Right cardiac atrium (tissue), 5 donors: ENCODE measurements at regions of chr5 and their contacts with region 1.

Region 1: DNA sequence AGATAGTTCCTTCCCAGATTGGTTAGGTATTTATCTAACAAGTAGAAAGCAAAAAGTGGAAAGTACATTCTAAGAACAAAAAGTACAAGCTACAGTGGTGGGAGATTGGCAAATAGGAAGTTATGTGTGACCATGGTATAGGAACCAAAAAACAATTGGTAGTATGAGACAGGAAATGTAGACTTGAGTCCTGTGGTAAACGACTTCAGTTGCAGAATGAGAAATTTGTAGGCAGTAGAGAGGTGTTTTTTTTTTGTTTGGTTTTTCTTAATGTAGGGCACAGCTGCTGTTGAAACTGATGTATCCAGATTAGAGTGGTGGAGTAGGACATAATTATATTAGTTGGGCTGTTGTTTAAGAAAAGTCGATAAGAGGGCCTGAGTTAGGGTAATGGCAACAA is 72.0 kb downstream of the CCNH start:
- DNase-seq: no peak
- ATAC-seq: peak; percentile 32 to 51
- H3K4me3 ChIP-seq: no peak overlapping the region
- H3K27ac ChIP-seq: no peak overlapping the region
- H3K4me1 ChIP-seq: no peaks in the 10 kb centered on the region
- H3K27me3 ChIP-seq: no peaks in the 10 kb centered on the region

Region 2: GRCh38 chr5:87277279-87277835 is 63.4 kb before region 1 on chr5:
- intact Hi-C with region 1: loop called in 2 of 4 experiments (anchors 10 kb)
- DNase-seq: no peak
- ATAC-seq: no peak
- H3K4me3 ChIP-seq: no peak overlapping the region
- H3K27ac ChIP-seq: no peak overlapping the region
- H3K4me1 ChIP-seq: peaks cover 4% of the 10 kb centered on the region
- H3K27me3 ChIP-seq: no peaks in the 10 kb centered on the region